MCF 10A (cell line): ENCODE measurements at regions of chr3 and their contacts with region 1.

Region 1: GRCh38 chr3:133475245-133476010 is 75.6 kb downstream of the BFSP2 start:
- DNase-seq: no peak
- H3K4me3 Mint-ChIP-seq: no peak overlapping the region
- H3K27ac Mint-ChIP-seq: no peak overlapping the region
- H3K4me1 Mint-ChIP-seq: peaks cover 6% of the 10 kb centered on the region
- H3K27me3 Mint-ChIP-seq: no peaks in the 10 kb centered on the region
- CTCF ChIP-seq: no peak

Region 2: DNA sequence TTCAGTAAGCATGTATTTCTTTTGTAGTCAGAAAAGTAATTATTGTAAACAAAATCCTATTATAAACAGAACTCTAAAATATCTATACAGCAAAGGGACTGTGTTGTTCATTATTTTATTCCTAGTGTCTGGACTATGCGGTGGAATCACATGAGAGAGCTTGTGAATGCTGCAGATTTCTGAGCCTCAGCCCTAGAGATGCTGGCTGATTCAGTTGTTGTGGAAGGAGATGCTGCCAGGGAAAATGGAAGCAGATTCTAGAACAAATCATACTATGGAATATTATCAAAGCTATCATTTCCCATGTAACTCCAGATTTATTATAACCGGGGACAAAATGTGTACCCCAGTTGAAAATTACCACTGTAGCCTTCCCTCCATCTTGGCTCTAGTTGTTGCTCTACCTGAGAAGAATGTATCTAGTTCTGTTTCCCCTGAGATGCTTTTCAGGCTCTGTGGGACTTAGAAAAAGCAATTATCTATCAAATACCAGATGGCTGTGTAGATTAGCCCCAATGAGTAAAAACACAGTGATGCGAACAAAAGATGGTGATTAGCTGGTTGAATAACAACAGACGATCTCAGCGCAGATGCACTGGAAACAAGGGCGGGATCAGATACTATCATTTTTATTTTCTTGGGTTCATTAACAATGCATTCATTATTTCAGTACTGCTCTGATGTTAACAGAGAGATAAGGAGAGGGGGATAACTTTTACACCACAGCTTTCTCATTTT is 305.9 kb before region 1 on chr3:
- CTCF ChIA-PET with region 1: no interaction called
- POLR2A ChIA-PET with region 1: no interaction called
- intact Hi-C with region 1: no loop called
- DNase-seq: no peak
- H3K4me3 Mint-ChIP-seq: no peak overlapping the region
- H3K27ac Mint-ChIP-seq: no peak overlapping the region
- H3K4me1 Mint-ChIP-seq: no peaks in the 10 kb centered on the region
- H3K27me3 Mint-ChIP-seq: peaks cover 3% of the 10 kb centered on the region
- CTCF ChIP-seq: no peak

Region 3: GRCh38 chr3:133487920-133488540 is 12.6 kb after region 1 on chr3:
- CTCF ChIA-PET with region 1: interaction called, 14 read pairs
- POLR2A ChIA-PET with region 1: interaction called, 7 read pairs
- intact Hi-C with region 1: no loop called
- DNase-seq: peak; percentile 58
- H3K4me3 Mint-ChIP-seq: no peak overlapping the region
- H3K27ac Mint-ChIP-seq: no peak overlapping the region
- H3K4me1 Mint-ChIP-seq: peaks cover 19% of the 10 kb centered on the region
- H3K27me3 Mint-ChIP-seq: no peaks in the 10 kb centered on the region
- CTCF ChIP-seq: peak; percentile 66